ENCODE measurements at regions of chr19 and their contacts with region 1.

Region 1: GRCh38 chr19:34501339-34502320 is 20.1 kb downstream of the WTIP start:
- DNase-seq: peak; percentile 96 to 99
- ATAC-seq: peak; percentile 80 to 91
- H3K4me3 ChIP-seq: no peak overlapping the region
- H3K27ac ChIP-seq: no peak overlapping the region
- H3K4me1 ChIP-seq: peaks cover 3% of the 10 kb centered on the region; the same call in 1 of the 3 replicates
- CTCF ChIP-seq: peak; percentile 100
- EP300 ChIP-seq: no peak
- POLR2A ChIP-seq: no peak
- RAD21 ChIP-seq: peak; percentile 97 to 98

Region 2: GRCh38 chr19:34475026-34475974 is 26.3 kb before region 1 on chr19:
- CTCF ChIA-PET with region 1: interaction called, 14 read pairs
- POLR2A ChIA-PET with region 1: no interaction called
- DNase-seq: peak in 1 of 2 experiments; percentile 52
- ATAC-seq: peak; percentile 33 to 55
- H3K4me3 ChIP-seq: no peak overlapping the region
- H3K27ac ChIP-seq: peak overlapping the region in 1 of 2 experiments; percentile 40; a peak in 3 of 6 replicates
- H3K4me1 ChIP-seq: peaks cover 19% of the 10 kb centered on the region
- CTCF ChIP-seq: no peak
- EP300 ChIP-seq: no peak
- POLR2A ChIP-seq: no peak
- RAD21 ChIP-seq: no peak

Region 3: DNA sequence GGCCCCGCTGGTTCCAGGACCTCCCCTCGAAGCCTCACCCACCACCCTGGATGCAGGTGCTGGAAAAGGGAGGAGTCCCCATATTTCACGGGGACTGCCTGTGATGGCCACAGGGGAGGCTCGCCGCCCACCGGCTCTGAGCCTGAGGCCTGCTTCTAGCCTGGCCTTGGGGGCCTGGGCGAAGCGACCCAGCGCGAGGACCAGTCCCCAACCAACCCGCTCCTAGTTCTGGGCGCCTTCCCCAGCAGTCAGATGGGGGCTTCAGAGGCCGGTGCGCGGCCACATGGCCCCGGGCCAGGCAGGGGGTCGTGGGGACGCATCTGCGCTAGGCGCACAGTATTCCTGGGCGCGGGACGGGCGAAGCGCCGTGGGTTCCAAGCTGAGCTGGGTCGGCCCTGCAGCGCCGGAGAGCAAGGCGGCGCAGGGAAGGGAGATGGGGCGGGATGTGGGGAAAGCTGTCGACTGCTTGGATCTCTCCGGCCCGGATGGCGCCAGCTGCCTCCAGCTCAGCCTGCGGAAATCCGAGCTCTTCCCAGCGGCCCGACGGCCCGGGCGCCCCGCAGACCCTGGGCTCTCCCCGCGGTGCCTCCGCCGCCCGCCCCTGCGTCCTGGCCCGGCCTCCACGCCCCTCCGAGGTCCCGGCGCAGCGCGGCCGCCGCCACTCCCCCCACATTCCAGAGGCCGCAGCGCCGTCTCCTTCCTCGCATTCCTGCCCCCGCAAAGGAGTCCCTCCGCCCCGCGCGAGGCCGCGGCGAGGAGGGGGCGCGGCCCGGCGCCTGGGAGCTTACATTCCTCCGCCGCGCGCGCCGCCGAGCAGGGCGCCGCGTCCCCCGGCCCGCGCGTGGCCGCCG is 20.4 kb before region 1 on chr19 and contains the start of gene WTIP:
- CTCF ChIA-PET with region 1: interaction called, 35 read pairs
- POLR2A ChIA-PET with region 1: no interaction called
- DNase-seq: peak; percentile 82 to 92
- ATAC-seq: peak; percentile 73 to 82
- H3K4me3 ChIP-seq: peak within 1 kb of the TSS; percentile 83
- H3K27ac ChIP-seq: peak within 1 kb of the TSS; percentile 87 to 91
- H3K4me1 ChIP-seq: peaks cover 11% of the 10 kb centered on the region; the same call in 2 of the 3 replicates
- CTCF ChIP-seq: no peak
- EP300 ChIP-seq: no peak
- POLR2A ChIP-seq: peak; percentile 48
- RAD21 ChIP-seq: no peak
- polyA plus RNA-seq, gene WTIP: 18.8 and 22.0 TPM in 2 replicates

Region 4: DNA sequence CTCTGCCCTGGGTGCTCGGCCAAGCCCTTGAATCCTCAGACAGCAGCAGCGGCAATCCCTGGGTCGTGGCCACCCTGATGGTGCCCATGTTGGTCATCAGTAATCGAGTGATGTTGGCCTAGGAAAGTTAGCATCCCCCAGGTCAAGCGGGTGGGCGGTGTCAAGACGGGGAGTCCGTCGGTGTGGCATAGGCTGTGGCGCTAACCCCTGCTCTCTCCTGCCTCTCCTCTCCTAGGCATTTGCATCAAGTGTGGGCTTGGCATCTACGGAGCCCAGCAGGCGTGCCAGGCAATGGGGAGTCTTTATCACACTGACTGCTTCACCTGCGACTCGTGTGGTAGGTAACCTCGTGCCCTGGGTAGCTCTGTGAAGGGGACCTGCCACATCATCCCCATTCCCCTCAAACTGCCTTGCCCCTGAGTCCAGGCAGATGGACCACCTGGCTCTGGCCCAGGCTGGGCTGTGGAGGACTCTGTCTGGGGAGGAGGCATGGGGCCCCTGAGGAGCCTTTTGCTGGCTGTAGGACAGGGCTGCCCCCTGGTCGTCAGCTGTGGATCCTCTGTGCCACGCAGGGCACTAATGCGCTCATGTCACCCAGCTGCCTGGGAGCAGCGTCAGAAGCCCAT is 11.4 kb before region 1 on chr19:
- CTCF ChIA-PET with region 1: interaction called, 29 read pairs
- POLR2A ChIA-PET with region 1: no interaction called
- DNase-seq: no peak
- ATAC-seq: peak in 1 of 2 experiments; percentile 11; a peak in 1 of 6 replicates
- H3K4me3 ChIP-seq: no peak overlapping the region
- H3K27ac ChIP-seq: no peak overlapping the region
- H3K4me1 ChIP-seq: no peaks in the 10 kb centered on the region
- CTCF ChIP-seq: no peak
- EP300 ChIP-seq: no peak
- POLR2A ChIP-seq: no peak
- RAD21 ChIP-seq: no peak

Region 5: GRCh38 chr19:34577531-34578107 is 76.0 kb after region 1 on chr19:
- CTCF ChIA-PET with region 1: no interaction called
- POLR2A ChIA-PET with region 1: no interaction called
- DNase-seq: no peak
- ATAC-seq: peak in 1 of 2 experiments; percentile 7; a peak in 2 of 6 replicates
- H3K4me3 ChIP-seq: no peak overlapping the region
- H3K27ac ChIP-seq: no peak overlapping the region
- H3K4me1 ChIP-seq: no peaks in the 10 kb centered on the region
- CTCF ChIP-seq: no peak
- EP300 ChIP-seq: no peak
- POLR2A ChIP-seq: no peak
- RAD21 ChIP-seq: no peak

Region 6: DNA sequence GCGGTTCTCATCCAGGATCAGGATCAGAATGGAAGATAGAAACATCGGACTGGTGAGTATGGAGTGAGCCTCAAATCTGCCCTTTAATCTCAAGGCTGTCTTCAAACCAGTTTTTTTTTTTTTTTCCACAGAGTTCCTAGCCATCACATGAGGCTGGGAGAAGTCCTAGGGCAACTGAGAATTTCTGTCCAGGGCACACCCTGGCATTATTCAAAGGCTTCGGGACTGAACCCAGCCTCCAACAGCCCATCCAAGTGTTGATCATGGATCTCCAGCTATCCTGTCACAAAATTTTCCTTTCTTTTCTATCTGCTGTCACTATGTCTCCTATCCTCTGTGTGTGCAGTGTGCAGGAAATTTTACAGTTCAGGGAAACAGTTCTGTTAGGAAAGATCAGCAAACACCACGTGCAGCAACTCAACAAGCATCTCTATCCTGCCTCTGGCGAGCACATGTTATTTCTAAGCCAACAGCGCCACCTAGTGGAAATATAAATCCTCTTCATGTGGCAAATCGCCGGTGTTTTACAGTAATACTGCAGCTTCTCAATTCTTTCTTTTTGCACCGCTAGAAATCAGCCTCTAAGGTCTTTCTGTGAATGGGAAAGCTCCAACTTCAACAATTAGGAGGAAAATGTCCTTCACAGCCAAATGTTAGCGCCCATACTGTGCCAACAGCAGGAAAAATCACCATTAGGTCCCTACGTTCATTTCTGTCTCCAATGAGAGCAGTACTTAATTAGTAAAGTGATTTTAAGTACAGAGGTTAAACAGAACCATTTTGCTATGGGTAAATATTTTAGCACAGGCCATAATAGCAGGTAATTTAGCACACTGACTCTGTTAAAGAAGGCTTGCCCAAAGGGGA is 211.0 kb after region 1 on chr19:
- CTCF ChIA-PET with region 1: interaction called, 13 read pairs
- POLR2A ChIA-PET with region 1: no interaction called
- DNase-seq: peak; percentile 77 to 90
- ATAC-seq: peak; percentile 75 to 95; a peak in 5 of 6 replicates
- H3K4me3 ChIP-seq: no peak overlapping the region
- H3K27ac ChIP-seq: no peak overlapping the region
- H3K4me1 ChIP-seq: no peaks in the 10 kb centered on the region
- CTCF ChIP-seq: peak; percentile 93
- EP300 ChIP-seq: no peak
- POLR2A ChIP-seq: no peak
- RAD21 ChIP-seq: peak; percentile 94 to 97